ENCODE measurements at regions of chr11 and their contacts with region 1.

Region 1: GRCh38 chr11:17063171-17064002 is 14.1 kb downstream of the RPS13 start:
- DNase-seq: peak; percentile 51 to 88 (median 78)
- ATAC-seq: peak; percentile 93 to 100 (median 98)
- H3K4me3 ChIP-seq: no peak overlapping the region
- H3K27ac ChIP-seq: no peak overlapping the region
- H3K4me1 ChIP-seq: no peaks in the 10 kb centered on the region
- H3K27me3 ChIP-seq: no peaks in the 10 kb centered on the region
- CTCF ChIP-seq: peak; percentile 68 to 78 (median 74)

Region 2: DNA sequence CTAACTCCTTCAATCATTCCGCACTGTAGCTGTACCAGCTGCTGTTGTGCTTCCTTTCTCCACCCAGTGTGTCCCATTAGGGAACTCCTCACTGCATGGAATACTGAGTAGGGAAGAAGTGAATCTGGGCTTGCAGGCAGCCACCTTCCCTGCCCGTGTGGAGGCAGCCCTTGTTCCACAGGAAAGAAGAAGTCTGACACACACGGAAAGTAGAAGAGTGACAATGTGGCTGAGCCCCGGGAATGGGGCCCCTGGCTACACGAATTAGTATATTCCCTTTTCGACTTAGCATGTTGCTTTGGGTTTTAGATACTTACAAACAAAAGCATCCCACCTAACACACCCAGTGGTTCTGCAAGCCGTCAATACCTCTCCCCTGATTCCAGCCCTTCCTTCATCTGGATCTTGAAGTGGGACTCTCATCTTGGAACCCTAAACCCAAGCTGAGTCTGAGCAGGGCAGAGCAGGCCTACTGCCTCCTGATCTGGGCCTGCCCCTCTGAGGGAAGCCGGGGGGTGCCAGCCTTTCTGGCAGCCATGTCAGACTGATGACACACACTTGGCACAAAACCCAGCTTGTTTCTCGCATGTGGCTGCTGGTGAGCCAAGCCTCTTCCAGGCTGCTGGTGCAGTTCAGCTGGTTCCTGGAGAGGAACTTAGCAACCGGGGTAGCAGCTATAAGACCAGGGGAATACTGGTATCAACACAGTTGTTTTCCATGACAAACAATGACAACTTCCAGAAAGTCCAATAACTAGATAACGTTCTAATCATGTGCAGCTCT is 253.3 kb before region 1 on chr11:
- intact Hi-C with region 1: loop called in 1 of 3 experiments (anchors 10 kb)
- DNase-seq: peak in 3 of 6 donors; percentile 36 to 56 (median 53)
- ATAC-seq: peak; percentile 33 to 63 (median 50)
- H3K4me3 ChIP-seq: no peak overlapping the region
- H3K27ac ChIP-seq: peak overlapping the region in 2 of 4 donors; percentile 21 to 34
- H3K4me1 ChIP-seq: peaks cover 0 to 5% (median 0%) of the 10 kb centered on the region in 3 donors
- H3K27me3 ChIP-seq: no peaks in the 10 kb centered on the region
- CTCF ChIP-seq: no peak

Region 3: DNA sequence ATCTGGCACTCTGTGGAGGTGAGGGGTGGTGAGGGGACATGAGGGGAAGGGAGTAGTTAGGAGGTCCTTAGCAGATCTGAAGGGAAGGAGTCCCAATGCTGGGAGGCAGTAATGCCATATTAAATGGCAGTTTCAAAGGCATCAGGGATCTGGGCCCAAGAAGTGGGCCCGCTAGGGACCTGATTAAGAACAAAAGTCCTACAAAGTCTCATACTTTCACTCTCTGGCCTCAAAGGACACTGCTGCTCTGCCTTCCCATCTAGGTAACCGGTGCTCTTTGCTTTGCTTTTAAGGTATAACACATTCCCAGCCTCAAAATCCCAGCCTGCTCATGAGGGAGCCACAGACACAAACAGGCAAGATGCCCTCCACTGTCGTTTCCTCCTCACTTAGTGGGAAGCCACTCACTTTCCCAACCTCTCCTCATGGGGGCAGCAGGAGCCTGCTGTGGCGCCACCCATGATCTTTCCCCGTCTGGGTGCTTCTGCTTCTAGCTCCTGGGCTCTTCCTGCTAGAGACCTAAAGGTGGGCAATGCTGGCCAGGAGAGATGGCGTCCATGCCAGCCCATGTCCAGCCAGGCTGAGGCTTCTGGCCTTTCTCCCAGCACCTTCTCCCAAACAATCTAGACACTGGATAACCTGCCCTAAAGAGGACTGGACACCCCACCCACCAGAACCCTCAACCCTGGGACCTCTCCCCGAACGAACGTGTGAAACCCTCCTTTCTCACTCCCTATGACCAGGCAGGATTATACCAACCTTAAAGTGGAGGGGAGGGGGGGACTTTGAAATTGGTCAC is 117.5 kb before region 1 on chr11:
- intact Hi-C with region 1: loop called (anchors 5 to 10 kb)
- DNase-seq: peak; percentile 56 to 85 (median 70)
- ATAC-seq: peak; percentile 96 to 99 (median 98)
- H3K4me3 ChIP-seq: no peak overlapping the region
- H3K27ac ChIP-seq: no peak overlapping the region
- H3K4me1 ChIP-seq: no peaks in the 10 kb centered on the region
- H3K27me3 ChIP-seq: no peaks in the 10 kb centered on the region
- CTCF ChIP-seq: peak; percentile 32 to 63 (median 59)

Region 4: GRCh38 chr11:17328871-17329494 is 265.6 kb after region 1 on chr11:
- intact Hi-C with region 1: no loop called
- DNase-seq: peak in 3 of 6 donors; percentile 28 to 43 (median 39)
- ATAC-seq: peak; percentile 61 to 84 (median 71)
- H3K4me3 ChIP-seq: no peak overlapping the region
- H3K27ac ChIP-seq: no peak overlapping the region
- H3K4me1 ChIP-seq: peaks cover 0 to 8% (median 4%) of the 10 kb centered on the region in 3 donors
- H3K27me3 ChIP-seq: no peaks in the 10 kb centered on the region
- CTCF ChIP-seq: no peak

Region 5: GRCh38 chr11:17423533-17424310 is 360.3 kb after region 1 on chr11:
- intact Hi-C with region 1: no loop called
- DNase-seq: peak in 5 of 6 donors; percentile 54 to 75 (median 70)
- ATAC-seq: peak; percentile 93 to 99 (median 97)
- H3K4me3 ChIP-seq: no peak overlapping the region
- H3K27ac ChIP-seq: no peak overlapping the region
- H3K4me1 ChIP-seq: no peaks in the 10 kb centered on the region
- H3K27me3 ChIP-seq: no peaks in the 10 kb centered on the region
- CTCF ChIP-seq: no peak